Sigmoid colon (tissue), 7 donors: ENCODE measurements at regions of chr7 and their contacts with region 1.

Region 1: DNA sequence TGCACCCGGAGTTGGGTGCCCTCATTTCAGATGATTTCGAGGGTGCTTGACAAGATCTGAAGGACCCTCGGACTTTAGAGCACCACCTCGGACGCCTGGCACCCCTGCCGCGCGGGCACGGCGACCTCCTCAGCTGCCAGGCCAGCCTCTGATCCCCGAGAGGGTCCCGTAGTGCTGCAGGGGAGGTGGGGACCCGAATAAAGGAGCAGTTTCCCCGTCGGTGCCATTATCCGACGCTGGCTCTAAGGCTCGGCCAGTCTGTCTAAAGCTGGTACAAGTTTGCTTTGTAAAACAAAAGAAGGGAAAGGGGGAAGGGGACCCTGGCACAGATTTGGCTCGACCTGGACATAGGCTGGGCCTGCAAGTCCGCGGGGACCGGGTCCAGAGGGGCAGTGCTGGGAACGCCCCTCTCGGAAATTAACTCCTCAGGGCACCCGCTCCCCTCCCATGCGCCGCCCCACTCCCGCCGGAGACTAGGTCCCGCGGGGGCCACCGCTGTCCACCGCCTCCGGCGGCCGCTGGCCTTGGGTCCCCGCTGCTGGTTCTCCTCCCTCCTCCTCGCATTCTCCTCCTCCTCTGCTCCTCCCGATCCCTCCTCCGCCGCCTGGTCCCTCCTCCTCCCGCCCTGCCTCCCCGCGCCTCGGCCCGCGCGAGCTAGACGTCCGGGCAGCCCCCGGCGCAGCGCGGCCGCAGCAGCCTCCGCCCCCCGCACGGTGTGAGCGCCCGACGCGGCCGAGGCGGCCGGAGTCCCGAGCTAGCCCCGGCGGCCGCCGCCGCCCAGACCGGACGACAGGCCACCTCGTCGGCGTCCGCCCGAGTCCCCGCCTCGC is at the start of gene EGFR:
- DNase-seq: peak; percentile 94
- H3K4me3 ChIP-seq: peak within 1 kb of the TSS; percentile 80 to 89 (median 82)
- H3K27ac ChIP-seq: peak within 1 kb of the TSS; percentile 93 to 97 (median 94)
- H3K4me1 ChIP-seq: peaks cover 0 to 28% (median 26%) of the 10 kb centered on the region in 4 donors
- H3K27me3 ChIP-seq: no peaks in the 10 kb centered on the region
- CTCF ChIP-seq: no peak
- EP300 ChIP-seq: no peak
- POLR2A ChIP-seq: peak in 1 of 2 donors; percentile 40
- total RNA-seq, gene EGFR: 35.6 to 61.5 (median 40.8) TPM

Region 2: GRCh38 chr7:54773472-54774399 is 244.8 kb before region 1 on chr7:
- intact Hi-C with region 1: loop called (anchors 10 kb)
- DNase-seq: peak; percentile 89
- H3K4me3 ChIP-seq: peak overlapping the region; percentile 7 to 42 (median 32)
- H3K27ac ChIP-seq: peak overlapping the region in 1 of 4 donors; percentile 28
- H3K4me1 ChIP-seq: peaks cover 0 to 8% (median 3%) of the 10 kb centered on the region in 4 donors
- H3K27me3 ChIP-seq: peaks cover 0 to 8% (median 0%) of the 10 kb centered on the region in 3 donors
- CTCF ChIP-seq: peak; percentile 63 to 81 (median 73)
- EP300 ChIP-seq: no peak
- POLR2A ChIP-seq: no peak

Region 3: GRCh38 chr7:54932818-54933543 is 85.6 kb before region 1 on chr7:
- intact Hi-C with region 1: loop called (anchors 5 kb)
- DNase-seq: peak; percentile 84
- H3K4me3 ChIP-seq: peak overlapping the region; percentile 25 to 50 (median 46)
- H3K27ac ChIP-seq: peak overlapping the region; percentile 65 to 77 (median 76)
- H3K4me1 ChIP-seq: peaks cover 0 to 15% (median 8%) of the 10 kb centered on the region in 4 donors
- H3K27me3 ChIP-seq: no peaks in the 10 kb centered on the region
- CTCF ChIP-seq: no peak
- EP300 ChIP-seq: no peak
- POLR2A ChIP-seq: no peak

Region 4: DNA sequence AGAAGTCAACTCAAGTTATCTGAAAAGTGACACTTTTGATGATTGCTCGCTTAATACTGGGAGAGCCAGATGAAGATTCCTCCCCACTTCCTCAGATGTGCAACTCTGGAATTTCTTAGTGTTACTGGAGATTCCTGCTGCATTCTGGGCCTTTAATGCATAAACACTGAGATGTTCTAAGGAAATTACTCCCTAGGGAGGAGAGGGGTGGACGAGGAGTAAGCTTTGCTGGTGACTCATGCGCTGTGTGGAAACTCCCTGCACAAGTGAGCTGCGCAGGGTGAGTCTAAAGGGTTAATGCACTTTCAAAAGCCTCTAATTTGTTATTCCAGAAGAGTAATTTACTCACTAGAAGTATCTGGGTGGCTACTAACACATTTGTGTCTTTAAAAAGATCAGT is 46.5 kb after region 1 on chr7:
- intact Hi-C with region 1: loop called (anchors 5 kb)
- DNase-seq: peak; percentile 90
- H3K4me3 ChIP-seq: peak overlapping the region in 2 of 4 donors; percentile 0 to 21
- H3K27ac ChIP-seq: peak overlapping the region; percentile 75 to 86 (median 80)
- H3K4me1 ChIP-seq: peaks cover 0 to 59% (median 55%) of the 10 kb centered on the region in 4 donors
- H3K27me3 ChIP-seq: no peaks in the 10 kb centered on the region
- CTCF ChIP-seq: no peak
- EP300 ChIP-seq: no peak
- POLR2A ChIP-seq: no peak

Region 5: GRCh38 chr7:55132890-55133551 is 114.4 kb after region 1 on chr7:
- intact Hi-C with region 1: loop called (anchors 2 kb)
- DNase-seq: peak; percentile 83
- H3K4me3 ChIP-seq: no peak overlapping the region
- H3K27ac ChIP-seq: peak overlapping the region; percentile 81 to 90 (median 87)
- H3K4me1 ChIP-seq: peaks cover 0 to 64% (median 61%) of the 10 kb centered on the region in 4 donors
- H3K27me3 ChIP-seq: no peaks in the 10 kb centered on the region
- CTCF ChIP-seq: no peak
- EP300 ChIP-seq: peak in 2 of 4 donors; percentile 36 to 80
- POLR2A ChIP-seq: no peak